CD14-positive monocyte (primary cell): ENCODE measurements at regions of chr12 and their contacts with region 1.

Region 1: DNA sequence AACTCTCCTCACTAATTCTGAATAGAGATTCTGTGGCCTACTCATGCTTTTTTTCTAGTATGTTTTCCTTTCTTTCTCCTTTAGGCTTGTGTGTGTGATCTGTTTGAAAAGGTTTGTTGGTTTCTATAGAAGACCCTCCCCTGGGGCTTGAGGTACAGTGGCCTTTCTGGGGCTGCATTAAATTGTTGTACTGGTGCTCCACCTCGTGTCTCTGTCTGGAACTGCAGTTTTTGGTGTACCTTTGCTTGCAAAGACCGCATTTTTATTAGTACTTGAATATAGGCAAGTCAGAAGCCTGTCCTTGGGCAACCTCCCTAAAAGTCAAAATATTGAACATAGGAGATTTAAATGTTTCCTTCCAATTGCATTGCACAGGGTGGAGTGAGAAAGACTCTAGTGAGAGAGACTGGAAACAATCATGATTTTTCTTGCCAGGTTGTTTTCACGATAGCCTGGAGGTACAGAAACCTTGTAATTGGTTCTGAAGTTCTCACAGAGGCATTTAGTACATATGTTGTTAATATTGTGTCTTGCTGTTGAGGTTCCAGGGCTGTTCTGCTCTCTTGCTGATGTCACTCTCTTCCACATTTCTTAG is 39.0 kb downstream of the SLCO1B1 start:
- DNase-seq: peak in 2 of 3 donors; percentile 0 to 3
- H3K4me3 ChIP-seq: no peak overlapping the region
- H3K4me3 Mint-ChIP-seq: no peak overlapping the region
- H3K27ac ChIP-seq: no peak overlapping the region
- H3K27ac Mint-ChIP-seq: peak overlapping the region in 1 of 7 donors; percentile 60
- H3K4me1 ChIP-seq: no peaks in the 10 kb centered on the region
- H3K4me1 Mint-ChIP-seq: no peaks in the 10 kb centered on the region
- H3K27me3 ChIP-seq: no peaks in the 10 kb centered on the region
- H3K27me3 Mint-ChIP-seq: peaks cover 0 to 1% (median 0%) of the 10 kb centered on the region in 3 donors
- CTCF ChIP-seq: peak; percentile 69

Region 2: DNA sequence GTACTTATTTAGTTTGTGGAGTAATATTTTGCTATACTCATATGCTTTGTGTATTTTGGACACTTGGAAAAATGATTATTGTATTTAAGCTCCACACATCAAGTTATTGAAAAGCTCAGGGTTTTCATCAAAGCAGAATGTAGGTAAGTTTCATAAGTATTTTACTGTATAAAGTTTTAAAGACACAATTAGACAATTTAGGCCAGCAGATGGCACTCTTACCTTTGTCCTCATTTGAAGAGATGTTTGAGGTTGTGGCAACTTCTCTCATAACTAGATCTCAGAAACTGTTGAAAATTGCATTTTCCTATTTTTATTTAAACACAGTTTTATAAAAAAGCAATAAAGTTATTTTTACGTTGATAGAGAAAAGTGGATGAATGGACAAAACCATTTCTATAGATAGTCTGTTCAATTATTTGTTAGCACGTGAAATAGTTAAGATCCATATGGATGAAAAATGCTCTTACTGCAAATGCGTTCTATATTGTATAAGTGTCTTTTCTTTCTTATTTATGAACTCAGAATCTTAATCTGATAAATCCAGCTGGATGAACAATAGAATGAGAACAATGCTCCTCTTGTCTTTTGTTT is 1430.7 kb before region 1 on chr12:
- intact Hi-C with region 1: loop called (anchors 5 to 10 kb)
- DNase-seq: peak; percentile 16 to 47 (median 33)
- H3K4me3 ChIP-seq: no peak overlapping the region
- H3K4me3 Mint-ChIP-seq: no peak overlapping the region
- H3K27ac ChIP-seq: no peak overlapping the region
- H3K27ac Mint-ChIP-seq: no peak overlapping the region
- H3K4me1 ChIP-seq: no peaks in the 10 kb centered on the region
- H3K4me1 Mint-ChIP-seq: peaks cover 4% of the 10 kb centered on the region
- H3K27me3 ChIP-seq: no peaks in the 10 kb centered on the region
- H3K27me3 Mint-ChIP-seq: peaks cover 0 to 1% (median 0%) of the 10 kb centered on the region in 3 donors
- CTCF ChIP-seq: peak; percentile 79

Region 3: GRCh38 chr12:19744734-19745218 is 1425.2 kb before region 1 on chr12:
- intact Hi-C with region 1: loop called (anchors 5 to 10 kb)
- DNase-seq: no peak
- H3K4me3 ChIP-seq: no peak overlapping the region
- H3K4me3 Mint-ChIP-seq: no peak overlapping the region
- H3K27ac ChIP-seq: no peak overlapping the region
- H3K27ac Mint-ChIP-seq: no peak overlapping the region
- H3K4me1 ChIP-seq: no peaks in the 10 kb centered on the region
- H3K4me1 Mint-ChIP-seq: peaks cover 4% of the 10 kb centered on the region
- H3K27me3 ChIP-seq: no peaks in the 10 kb centered on the region
- H3K27me3 Mint-ChIP-seq: peaks cover 0 to 2% (median 1%) of the 10 kb centered on the region in 3 donors
- CTCF ChIP-seq: no peak